Adrenal gland (tissue), 19 donors: ENCODE measurements at regions of chr20 and their contacts with region 1.

Region 1: GRCh38 chr20:44683263-44684046 is 31.7 kb upstream of the CCN5 start:
- DNase-seq: peak in 5 of 7 donors; percentile 56 to 75 (median 66)
- H3K4me3 ChIP-seq: no peak overlapping the region
- H3K27ac ChIP-seq: peak overlapping the region in 3 of 5 donors; percentile 37 to 83 (median 66)
- H3K4me1 ChIP-seq: peaks cover 5 to 7% of the 10 kb centered on the region in 2 donors
- H3K27me3 ChIP-seq: no peaks in the 10 kb centered on the region
- CTCF ChIP-seq: peak; percentile 33 to 71 (median 51)
- POLR2A ChIP-seq: no peak

Region 2: GRCh38 chr20:44586289-44586911 is 97.1 kb before region 1 on chr20:
- intact Hi-C with region 1: no loop called
- DNase-seq: no peak
- H3K4me3 ChIP-seq: no peak overlapping the region
- H3K27ac ChIP-seq: peak overlapping the region in 2 of 5 donors; percentile 0 to 19
- H3K4me1 ChIP-seq: peaks cover 21 to 41% of the 10 kb centered on the region in 2 donors
- H3K27me3 ChIP-seq: no peaks in the 10 kb centered on the region
- CTCF ChIP-seq: no peak
- POLR2A ChIP-seq: no peak

Region 3: GRCh38 chr20:44598423-44599305 is 84.8 kb before region 1 on chr20:
- intact Hi-C with region 1: no loop called
- DNase-seq: peak in 6 of 7 donors; percentile 39 to 66 (median 50)
- H3K4me3 ChIP-seq: peak overlapping the region in 1 of 4 donors; percentile 15
- H3K27ac ChIP-seq: peak overlapping the region in 4 of 5 donors; percentile 2 to 93 (median 89)
- H3K4me1 ChIP-seq: peaks cover 51 to 81% of the 10 kb centered on the region in 2 donors
- H3K27me3 ChIP-seq: no peaks in the 10 kb centered on the region
- CTCF ChIP-seq: no peak
- POLR2A ChIP-seq: no peak

Region 4: GRCh38 chr20:44733341-44734069 is 50.0 kb after region 1 on chr20:
- intact Hi-C with region 1: loop called (anchors 2 kb)
- DNase-seq: peak; percentile 66 to 88 (median 80)
- H3K4me3 ChIP-seq: no peak overlapping the region
- H3K27ac ChIP-seq: no peak overlapping the region
- H3K4me1 ChIP-seq: peaks cover 14 to 20% of the 10 kb centered on the region in 2 donors
- H3K27me3 ChIP-seq: no peaks in the 10 kb centered on the region
- CTCF ChIP-seq: peak; percentile 92 to 97 (median 96)
- POLR2A ChIP-seq: no peak